B cell (primary cell): ENCODE measurements at regions of chr1 and their contacts with region 1.

Region 1: DNA sequence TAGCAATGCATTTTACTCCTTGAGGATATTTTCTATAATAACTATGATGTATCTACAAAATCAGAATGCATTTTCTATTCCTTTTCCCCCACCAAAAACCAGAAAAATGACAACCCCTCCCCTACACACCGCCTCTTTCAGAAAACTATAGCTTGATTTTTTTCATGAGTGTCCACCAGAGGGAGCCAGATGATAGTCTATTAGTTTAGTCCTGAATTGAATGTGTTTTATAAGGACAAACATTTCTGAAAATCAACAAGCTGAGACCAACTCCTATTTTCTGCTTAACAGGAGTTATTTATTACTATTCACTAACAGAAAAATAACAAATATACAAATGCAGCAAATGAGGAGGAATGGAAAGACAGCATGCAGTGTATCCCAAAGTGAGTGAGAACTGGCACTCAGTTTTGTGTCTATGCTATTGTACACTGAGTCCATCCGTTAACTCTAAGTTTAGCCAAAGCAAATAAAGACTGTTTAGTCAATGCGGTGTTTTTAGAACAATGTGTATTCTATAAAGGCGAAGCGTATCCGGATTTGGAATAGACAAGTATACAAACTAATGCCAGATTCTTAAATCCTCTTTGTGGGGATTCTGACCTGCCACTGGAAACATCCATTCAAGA is 182.6 kb downstream of the VAV3 start:
- DNase-seq: peak; percentile 81
- ATAC-seq: no peak
- H3K4me3 ChIP-seq: no peak overlapping the region
- H3K4me3 Mint-ChIP-seq: no peak overlapping the region
- H3K27ac ChIP-seq: peak overlapping the region in 1 of 2 donors; percentile 38
- H3K27ac Mint-ChIP-seq: no peak overlapping the region
- H3K4me1 ChIP-seq: peaks cover 42 to 51% of the 10 kb centered on the region in 2 donors
- H3K4me1 Mint-ChIP-seq: peaks cover 56% of the 10 kb centered on the region
- H3K27me3 ChIP-seq: no peaks in the 10 kb centered on the region
- H3K27me3 Mint-ChIP-seq: no peaks in the 10 kb centered on the region
- CTCF ChIP-seq: peak; percentile 93

Region 2: GRCh38 chr1:107590900-107591633 is 191.3 kb before region 1 on chr1:
- CTCF ChIA-PET with region 1: no interaction called
- POLR2A ChIA-PET with region 1: no interaction called
- intact Hi-C with region 1: no loop called
- DNase-seq: peak; percentile 15
- ATAC-seq: peak; percentile 61
- H3K4me3 ChIP-seq: no peak overlapping the region
- H3K4me3 Mint-ChIP-seq: no peak overlapping the region
- H3K27ac ChIP-seq: no peak overlapping the region
- H3K27ac Mint-ChIP-seq: no peak overlapping the region
- H3K4me1 ChIP-seq: no peaks in the 10 kb centered on the region
- H3K4me1 Mint-ChIP-seq: peaks cover 14% of the 10 kb centered on the region
- H3K27me3 ChIP-seq: no peaks in the 10 kb centered on the region
- H3K27me3 Mint-ChIP-seq: no peaks in the 10 kb centered on the region
- CTCF ChIP-seq: no peak

Region 3: DNA sequence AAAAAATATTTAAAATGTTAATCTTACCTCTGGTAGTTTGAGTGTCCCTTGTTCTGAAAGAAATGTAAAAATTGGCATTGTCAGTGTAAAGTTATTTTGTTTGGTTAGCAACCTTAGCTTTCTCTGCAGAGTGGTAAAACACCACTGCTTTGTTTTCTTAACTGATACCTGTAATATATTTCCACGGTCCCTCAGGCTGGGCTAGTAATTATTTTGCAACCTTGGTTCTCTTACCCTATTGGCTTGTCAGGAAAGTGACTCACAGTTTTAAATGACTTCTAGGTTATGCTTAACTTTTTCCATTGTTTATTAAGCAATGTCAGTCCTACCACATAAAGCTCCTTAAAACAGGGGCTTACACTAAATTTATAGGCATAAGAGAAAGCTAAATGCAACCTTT is 94.0 kb before region 1 on chr1:
- CTCF ChIA-PET with region 1: no interaction called
- POLR2A ChIA-PET with region 1: no interaction called
- intact Hi-C with region 1: no loop called
- DNase-seq: no peak
- ATAC-seq: no peak
- H3K4me3 ChIP-seq: no peak overlapping the region
- H3K4me3 Mint-ChIP-seq: no peak overlapping the region
- H3K27ac ChIP-seq: no peak overlapping the region
- H3K27ac Mint-ChIP-seq: no peak overlapping the region
- H3K4me1 ChIP-seq: no peaks in the 10 kb centered on the region
- H3K4me1 Mint-ChIP-seq: no peaks in the 10 kb centered on the region
- H3K27me3 ChIP-seq: no peaks in the 10 kb centered on the region
- H3K27me3 Mint-ChIP-seq: no peaks in the 10 kb centered on the region
- CTCF ChIP-seq: no peak

Region 4: GRCh38 chr1:107840725-107841124 is 58.4 kb after region 1 on chr1:
- CTCF ChIA-PET with region 1: interaction called, 15 read pairs
- POLR2A ChIA-PET with region 1: interaction called, 3 read pairs
- intact Hi-C with region 1: no loop called
- DNase-seq: peak; percentile 50
- ATAC-seq: peak; percentile 50
- H3K4me3 ChIP-seq: peak overlapping the region in 2 of 5 experiments; percentile 22 to 45
- H3K4me3 Mint-ChIP-seq: peak overlapping the region; percentile 76
- H3K27ac ChIP-seq: peak overlapping the region; percentile 43 to 64
- H3K27ac Mint-ChIP-seq: peak overlapping the region; percentile 85
- H3K4me1 ChIP-seq: peaks cover 78 to 93% of the 10 kb centered on the region in 2 donors
- H3K4me1 Mint-ChIP-seq: peaks cover 92% of the 10 kb centered on the region
- H3K27me3 ChIP-seq: no peaks in the 10 kb centered on the region
- H3K27me3 Mint-ChIP-seq: no peaks in the 10 kb centered on the region
- CTCF ChIP-seq: no peak

Region 5: GRCh38 chr1:107936498-107937481 is 154.5 kb after region 1 on chr1:
- CTCF ChIA-PET with region 1: interaction called, 11 read pairs
- POLR2A ChIA-PET with region 1: no interaction called
- intact Hi-C with region 1: loop called (anchors 1 kb)
- DNase-seq: peak; percentile 42
- ATAC-seq: peak; percentile 54
- H3K4me3 ChIP-seq: no peak overlapping the region
- H3K4me3 Mint-ChIP-seq: peak overlapping the region; percentile 69
- H3K27ac ChIP-seq: peak overlapping the region in 1 of 2 donors; percentile 3
- H3K27ac Mint-ChIP-seq: peak overlapping the region; percentile 78
- H3K4me1 ChIP-seq: peaks cover 50 to 56% of the 10 kb centered on the region in 2 donors
- H3K4me1 Mint-ChIP-seq: peaks cover 81% of the 10 kb centered on the region
- H3K27me3 ChIP-seq: no peaks in the 10 kb centered on the region
- H3K27me3 Mint-ChIP-seq: no peaks in the 10 kb centered on the region
- CTCF ChIP-seq: no peak

Region 6: DNA sequence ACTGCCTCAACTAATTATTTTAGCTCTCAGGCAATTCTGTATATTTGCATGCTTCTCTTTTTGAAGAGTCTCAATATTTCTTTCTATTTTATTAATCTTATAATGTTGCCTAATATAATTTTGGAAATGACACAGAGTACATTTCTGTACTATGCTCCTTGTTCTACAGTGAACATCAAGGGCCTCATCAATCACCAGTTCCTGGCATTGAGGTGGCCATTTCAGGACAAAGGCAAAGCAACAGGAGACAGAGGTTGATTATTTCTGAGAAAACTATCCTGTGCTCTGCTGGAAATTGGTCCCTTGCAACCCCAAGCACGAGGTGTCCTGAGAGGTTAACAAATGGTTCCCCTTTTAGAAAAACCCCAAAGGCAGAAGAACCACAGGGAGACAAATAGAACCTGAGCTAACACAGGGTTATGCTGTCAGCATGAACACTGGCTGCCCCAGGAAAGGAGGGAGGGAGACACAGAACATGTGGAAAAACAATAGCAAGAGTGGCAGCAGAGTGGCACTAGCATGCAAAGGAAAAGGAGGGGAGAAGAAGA is 246.6 kb after region 1 on chr1:
- CTCF ChIA-PET with region 1: interaction called, 10 read pairs
- POLR2A ChIA-PET with region 1: no interaction called
- intact Hi-C with region 1: no loop called
- DNase-seq: no peak
- ATAC-seq: no peak
- H3K4me3 ChIP-seq: no peak overlapping the region
- H3K4me3 Mint-ChIP-seq: no peak overlapping the region
- H3K27ac ChIP-seq: no peak overlapping the region
- H3K27ac Mint-ChIP-seq: no peak overlapping the region
- H3K4me1 ChIP-seq: peaks cover 19 to 23% of the 10 kb centered on the region in 2 donors
- H3K4me1 Mint-ChIP-seq: peaks cover 16% of the 10 kb centered on the region
- H3K27me3 ChIP-seq: no peaks in the 10 kb centered on the region
- H3K27me3 Mint-ChIP-seq: no peaks in the 10 kb centered on the region
- CTCF ChIP-seq: no peak

Region 7: GRCh38 chr1:108075055-108075454 is 292.7 kb after region 1 on chr1:
- CTCF ChIA-PET with region 1: interaction called, 6 read pairs
- POLR2A ChIA-PET with region 1: no interaction called
- intact Hi-C with region 1: loop called (anchors 5 kb)
- DNase-seq: peak; percentile 88
- ATAC-seq: peak; percentile 79
- H3K4me3 ChIP-seq: no peak overlapping the region
- H3K4me3 Mint-ChIP-seq: peak overlapping the region; percentile 42
- H3K27ac ChIP-seq: peak overlapping the region; percentile 67 to 71
- H3K27ac Mint-ChIP-seq: peak overlapping the region; percentile 80
- H3K4me1 ChIP-seq: peaks cover 44 to 57% of the 10 kb centered on the region in 2 donors
- H3K4me1 Mint-ChIP-seq: peaks cover 62% of the 10 kb centered on the region
- H3K27me3 ChIP-seq: no peaks in the 10 kb centered on the region
- H3K27me3 Mint-ChIP-seq: no peaks in the 10 kb centered on the region
- CTCF ChIP-seq: no peak

Region 8: DNA sequence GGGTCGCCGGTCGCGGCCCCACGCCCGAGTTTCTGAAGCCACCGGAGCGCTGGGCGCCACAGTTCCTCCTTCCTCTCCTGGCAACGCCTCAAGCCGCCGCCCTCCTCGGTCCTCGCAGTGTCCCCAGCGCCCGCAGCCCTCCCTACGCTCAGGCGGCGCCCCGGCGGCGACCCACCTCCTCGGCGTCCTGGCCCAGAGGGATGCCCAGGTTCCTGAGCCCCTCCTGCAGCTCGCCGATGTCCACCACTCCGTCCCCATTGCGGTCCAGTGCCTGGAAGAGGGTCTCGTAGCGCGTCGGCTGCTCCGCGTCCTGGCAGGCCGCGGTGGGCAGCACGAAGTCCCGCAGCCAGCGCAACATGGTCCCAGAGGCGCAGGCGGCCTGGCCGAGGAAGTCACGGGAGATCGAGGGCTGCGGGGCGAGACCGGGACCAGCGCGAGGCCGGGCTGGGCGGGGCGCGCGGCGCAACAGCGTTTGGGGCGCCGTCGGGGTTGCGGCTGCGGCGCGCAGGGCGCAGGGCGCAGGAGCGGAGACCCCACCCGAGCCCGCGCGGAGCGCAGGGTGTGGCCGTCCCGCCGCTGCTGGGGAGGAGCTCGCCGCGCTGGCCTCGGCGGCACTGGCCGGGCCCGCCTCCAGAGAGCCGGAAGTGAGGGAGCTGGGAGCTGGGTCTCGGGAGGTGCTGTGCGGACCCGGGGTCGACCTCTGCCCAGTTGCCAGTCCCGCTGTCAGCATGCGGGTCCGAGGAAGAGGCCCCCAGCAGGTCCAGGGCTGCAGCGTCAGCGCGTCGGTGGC is 417.6 kb after region 1 on chr1 and contains the start of gene SLC25A24:
- CTCF ChIA-PET with region 1: interaction called, 17 read pairs
- POLR2A ChIA-PET with region 1: no interaction called
- intact Hi-C with region 1: loop called (anchors 5 kb)
- DNase-seq: peak; percentile 85
- ATAC-seq: peak; percentile 95
- H3K4me3 ChIP-seq: peak within 1 kb of the TSS; percentile 85 to 96 (median 87)
- H3K4me3 Mint-ChIP-seq: peak within 1 kb of the TSS; percentile 93
- H3K27ac ChIP-seq: peak within 1 kb of the TSS; percentile 80 to 84
- H3K27ac Mint-ChIP-seq: peak within 1 kb of the TSS; percentile 94
- H3K4me1 ChIP-seq: peaks cover 13 to 16% of the 10 kb centered on the region in 2 donors
- H3K4me1 Mint-ChIP-seq: peaks cover 32% of the 10 kb centered on the region
- H3K27me3 ChIP-seq: no peaks in the 10 kb centered on the region
- H3K27me3 Mint-ChIP-seq: no peaks in the 10 kb centered on the region
- CTCF ChIP-seq: no peak
- total RNA-seq, gene SLC25A24: 25.3 and 25.6 TPM in 2 replicates